ENCODE measurements at regions of chr13 and their contacts with region 1.

Region 1: DNA sequence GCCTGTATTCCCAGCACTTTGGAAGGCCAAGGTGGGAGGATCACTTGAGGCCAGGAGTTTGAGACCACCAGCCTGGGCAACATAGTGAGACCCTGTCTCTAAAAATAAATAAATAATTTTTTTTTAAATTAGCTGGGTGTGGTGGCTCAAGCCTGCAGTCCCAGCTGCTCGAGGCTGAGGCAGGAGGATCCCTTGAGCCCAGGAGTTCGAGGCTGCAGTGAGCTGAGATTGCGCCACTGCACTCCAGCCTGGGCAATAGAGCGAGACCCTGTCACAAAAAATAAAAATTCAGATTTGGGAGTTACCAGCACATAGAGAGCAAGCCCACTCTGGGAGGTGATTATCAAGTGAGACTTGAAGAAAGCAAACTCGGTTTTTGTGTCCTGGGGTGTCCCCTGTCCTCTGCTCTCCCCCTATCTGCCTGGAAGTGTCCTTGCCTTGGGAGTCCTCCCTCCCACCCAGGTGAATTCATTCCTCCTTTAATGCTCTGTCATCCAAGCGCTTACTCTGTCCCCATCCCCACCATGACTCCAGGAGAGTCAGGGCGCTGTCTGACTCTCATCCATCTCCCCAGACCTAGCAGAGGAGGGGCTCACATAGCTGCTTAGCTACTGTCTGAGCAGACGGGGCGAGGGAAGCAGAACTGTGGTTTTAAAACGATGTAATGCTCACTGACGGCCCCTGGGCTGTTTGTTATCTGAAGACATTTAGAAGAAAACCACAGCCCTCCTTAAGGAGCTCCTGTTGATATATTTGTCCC is 146.8 kb downstream of the STK24 start:
- DNase-seq: no peak
- ATAC-seq: no peak
- H3K4me3 ChIP-seq: no peak overlapping the region
- H3K27ac ChIP-seq: no peak overlapping the region
- H3K4me1 ChIP-seq: no peaks in the 10 kb centered on the region
- CTCF ChIP-seq: no peak
- EP300 ChIP-seq: no peak
- POLR2A ChIP-seq: no peak
- RAD21 ChIP-seq: no peak

Region 2: DNA sequence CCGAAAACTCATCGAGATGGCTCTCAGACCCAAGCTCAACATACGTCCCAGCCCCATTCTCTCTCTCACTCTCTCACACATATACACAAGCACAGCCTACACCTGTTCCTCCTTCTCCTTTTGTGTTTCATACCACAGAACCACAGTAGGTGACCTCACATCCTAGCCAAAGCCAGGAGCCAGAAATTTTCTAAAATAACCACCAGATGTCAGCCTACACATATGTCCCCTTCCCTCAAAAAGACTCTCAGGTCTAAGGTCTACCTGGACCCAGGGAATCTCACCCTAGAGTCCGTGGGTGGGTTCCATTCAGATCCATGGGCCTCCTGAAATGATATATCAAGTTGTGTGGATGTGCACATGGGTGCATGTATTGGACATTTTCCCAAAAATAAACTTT is 580.9 kb before region 1 on chr13:
- CTCF ChIA-PET with region 1: interaction called, 15 read pairs
- POLR2A ChIA-PET with region 1: no interaction called
- DNase-seq: peak; percentile 13 to 24
- ATAC-seq: peak; percentile 80 to 81; a peak in 5 of 6 replicates
- H3K4me3 ChIP-seq: no peak overlapping the region
- H3K27ac ChIP-seq: no peak overlapping the region
- H3K4me1 ChIP-seq: peaks cover 14% of the 10 kb centered on the region; the same call in 1 of the 3 replicates
- CTCF ChIP-seq: peak; percentile 53
- EP300 ChIP-seq: no peak
- POLR2A ChIP-seq: no peak
- RAD21 ChIP-seq: peak; percentile 56 to 61

Region 3: GRCh38 chr13:98033277-98034247 is 396.6 kb before region 1 on chr13:
- CTCF ChIA-PET with region 1: interaction called, 23 read pairs
- POLR2A ChIA-PET with region 1: no interaction called
- DNase-seq: peak; percentile 13 to 51
- ATAC-seq: peak; percentile 68 to 71
- H3K4me3 ChIP-seq: peak overlapping the region; percentile 16; the same call in 1 of the 3 replicates
- H3K27ac ChIP-seq: peak overlapping the region; percentile 37 to 63; a peak in 4 of 6 replicates
- H3K4me1 ChIP-seq: peaks cover 14% of the 10 kb centered on the region; the same call in 2 of the 3 replicates
- CTCF ChIP-seq: peak; percentile 46; the same call in 2 of the 3 replicates
- EP300 ChIP-seq: no peak
- POLR2A ChIP-seq: no peak
- RAD21 ChIP-seq: peak; percentile 53 to 59; a peak in 4 of 5 replicates

Region 4: GRCh38 chr13:98044301-98044700 is 385.9 kb before region 1 on chr13:
- CTCF ChIA-PET with region 1: no interaction called
- POLR2A ChIA-PET with region 1: no interaction called
- DNase-seq: no peak
- ATAC-seq: no peak
- H3K4me3 ChIP-seq: no peak overlapping the region
- H3K27ac ChIP-seq: no peak overlapping the region
- H3K4me1 ChIP-seq: no peaks in the 10 kb centered on the region
- CTCF ChIP-seq: no peak
- EP300 ChIP-seq: no peak
- POLR2A ChIP-seq: no peak
- RAD21 ChIP-seq: no peak

Measured in A549 (cell line).